ENCODE measurements at regions of chr17 and their contacts with region 1.

Region 1: GRCh38 chr17:38584350-38584925 is 21.3 kb downstream of the SRCIN1 start:
- DNase-seq: peak; percentile 99
- H3K4me3 Mint-ChIP-seq: peak overlapping the region; percentile 9
- H3K27ac Mint-ChIP-seq: peak overlapping the region; percentile 3
- H3K4me1 Mint-ChIP-seq: peaks cover 37% of the 10 kb centered on the region
- H3K27me3 Mint-ChIP-seq: peaks cover 71% of the 10 kb centered on the region
- CTCF ChIP-seq: peak; percentile 100

Region 2: GRCh38 chr17:38498186-38498752 is 86.2 kb before region 1 on chr17:
- CTCF ChIA-PET with region 1: no interaction called
- intact Hi-C with region 1: loop called (anchors 2 kb)
- DNase-seq: no peak
- H3K4me3 Mint-ChIP-seq: no peak overlapping the region
- H3K27ac Mint-ChIP-seq: no peak overlapping the region
- H3K4me1 Mint-ChIP-seq: no peaks in the 10 kb centered on the region
- H3K27me3 Mint-ChIP-seq: no peaks in the 10 kb centered on the region
- CTCF ChIP-seq: peak; percentile 41

Region 3: GRCh38 chr17:38509008-38509771 is 75.2 kb before region 1 on chr17:
- CTCF ChIA-PET with region 1: interaction called, 4 read pairs
- intact Hi-C with region 1: loop called (anchors 5 kb)
- DNase-seq: peak; percentile 52
- H3K4me3 Mint-ChIP-seq: no peak overlapping the region
- H3K27ac Mint-ChIP-seq: peak overlapping the region; percentile 11
- H3K4me1 Mint-ChIP-seq: no peaks in the 10 kb centered on the region
- H3K27me3 Mint-ChIP-seq: no peaks in the 10 kb centered on the region
- CTCF ChIP-seq: peak; percentile 62

Region 4: DNA sequence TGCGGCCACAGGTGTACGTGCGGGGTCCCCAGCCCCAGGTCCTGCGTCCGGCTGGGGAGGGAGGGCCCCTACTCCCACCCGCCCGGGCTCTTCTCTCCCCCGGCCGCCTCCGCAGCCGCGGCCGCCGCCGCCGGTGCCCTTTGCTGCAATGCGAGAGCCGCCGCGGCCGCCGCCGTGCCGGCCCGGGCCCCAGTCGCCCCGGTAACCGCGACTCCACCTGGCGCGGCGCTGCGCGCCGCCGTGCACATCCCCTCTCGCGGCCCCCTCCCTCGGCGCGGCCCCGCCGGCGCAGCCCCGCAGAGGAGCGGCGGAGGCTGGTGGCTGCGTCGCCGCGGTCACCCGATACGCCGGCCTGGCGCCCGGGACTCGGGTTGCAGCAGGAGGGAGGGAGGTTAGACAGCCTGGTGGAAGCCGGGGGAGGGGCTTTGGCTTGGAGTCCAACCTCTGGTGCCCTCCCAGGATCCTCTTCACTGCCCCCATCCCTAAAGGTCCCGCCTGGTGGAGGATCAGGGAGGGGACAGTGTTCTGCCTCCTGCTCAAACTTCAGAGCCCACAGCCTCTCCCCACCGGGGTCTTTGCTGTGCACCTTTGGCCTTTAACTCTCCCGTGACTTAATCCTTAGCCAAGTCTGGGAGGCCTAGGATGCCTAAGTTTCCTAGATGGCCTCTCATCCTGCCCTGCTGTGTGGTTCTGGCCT is 11.6 kb before region 1 on chr17:
- CTCF ChIA-PET with region 1: interaction called, 10 read pairs
- intact Hi-C with region 1: no loop called
- DNase-seq: peak; percentile 75
- H3K4me3 Mint-ChIP-seq: peak overlapping the region; percentile 24
- H3K27ac Mint-ChIP-seq: no peak overlapping the region
- H3K4me1 Mint-ChIP-seq: peaks cover 10% of the 10 kb centered on the region
- H3K27me3 Mint-ChIP-seq: peaks cover 100% of the 10 kb centered on the region
- CTCF ChIP-seq: no peak

Region 5: DNA sequence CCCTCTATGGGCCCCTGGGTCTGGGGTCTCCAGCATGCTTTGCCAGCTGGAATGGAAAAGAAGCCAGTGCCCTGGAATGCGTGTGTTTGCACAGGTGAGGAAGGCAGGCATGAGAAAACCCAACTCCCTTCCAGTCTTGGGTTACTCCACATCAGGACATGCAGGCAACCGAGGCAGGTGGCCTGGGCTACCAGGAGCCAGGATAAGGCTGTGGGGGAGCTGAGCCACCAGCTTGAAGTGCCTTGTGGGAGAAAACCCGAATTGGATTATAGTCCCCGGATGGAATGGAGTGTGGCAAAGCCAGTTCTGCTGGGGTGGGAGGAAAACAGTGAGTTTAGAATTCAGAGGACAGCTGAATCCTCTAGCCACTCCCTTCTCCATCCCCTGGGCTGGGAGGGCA is 14.1 kb after region 1 on chr17:
- CTCF ChIA-PET with region 1: interaction called, 47 read pairs
- intact Hi-C with region 1: no loop called
- DNase-seq: peak; percentile 98
- H3K4me3 Mint-ChIP-seq: no peak overlapping the region
- H3K27ac Mint-ChIP-seq: no peak overlapping the region
- H3K4me1 Mint-ChIP-seq: peaks cover 21% of the 10 kb centered on the region
- H3K27me3 Mint-ChIP-seq: peaks cover 99% of the 10 kb centered on the region
- CTCF ChIP-seq: no peak

Region 6: DNA sequence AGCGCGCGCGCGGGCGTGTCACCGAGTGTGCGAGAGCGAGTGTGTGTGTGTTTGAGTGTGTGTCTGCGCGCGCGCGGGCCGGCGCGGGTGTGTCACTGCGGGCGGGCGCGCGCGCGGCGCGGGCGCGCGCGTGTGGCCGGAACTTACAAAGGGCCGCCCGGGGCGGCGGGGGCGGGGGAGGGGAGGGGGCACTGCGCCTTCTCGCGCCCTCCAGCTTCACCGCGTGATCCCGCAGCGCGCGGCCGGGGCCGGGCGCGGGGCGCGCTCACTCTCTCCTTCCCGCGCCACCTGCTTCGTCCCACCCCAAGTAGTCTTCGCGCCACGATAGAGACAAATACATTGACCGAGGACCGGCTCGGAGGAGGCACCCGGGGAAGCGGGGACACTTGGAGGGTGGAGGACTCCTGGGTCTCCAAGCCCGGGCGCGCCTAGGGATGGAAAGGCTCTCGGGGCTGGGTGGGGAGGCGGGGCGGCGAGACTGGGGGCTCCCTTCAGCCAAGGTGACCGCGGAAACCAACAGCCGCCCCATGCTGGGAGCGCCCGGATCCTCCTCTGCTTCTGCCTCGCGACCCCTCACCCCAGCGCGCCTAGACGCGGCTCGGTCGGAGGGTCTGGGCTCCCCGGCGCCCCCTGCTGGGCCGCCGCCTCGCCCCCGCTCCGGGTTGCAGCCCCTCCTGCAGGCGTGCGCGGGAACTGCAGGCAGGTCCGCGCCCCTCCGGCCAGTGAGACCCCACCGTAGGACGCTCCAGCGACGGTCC is 21.6 kb after region 1 on chr17 and contains the start of gene SRCIN1:
- CTCF ChIA-PET with region 1: interaction called, 11 read pairs
- intact Hi-C with region 1: no loop called
- DNase-seq: peak; percentile 91
- H3K4me3 Mint-ChIP-seq: peak within 1 kb of the TSS; percentile 74
- H3K27ac Mint-ChIP-seq: peak within 1 kb of the TSS; percentile 48
- H3K4me1 Mint-ChIP-seq: peaks cover 31% of the 10 kb centered on the region
- H3K27me3 Mint-ChIP-seq: peaks cover 99% of the 10 kb centered on the region
- CTCF ChIP-seq: peak; percentile 100
- total RNA-seq, gene SRCIN1: 46.6 and 46.7 TPM in 2 replicates

Region 7: DNA sequence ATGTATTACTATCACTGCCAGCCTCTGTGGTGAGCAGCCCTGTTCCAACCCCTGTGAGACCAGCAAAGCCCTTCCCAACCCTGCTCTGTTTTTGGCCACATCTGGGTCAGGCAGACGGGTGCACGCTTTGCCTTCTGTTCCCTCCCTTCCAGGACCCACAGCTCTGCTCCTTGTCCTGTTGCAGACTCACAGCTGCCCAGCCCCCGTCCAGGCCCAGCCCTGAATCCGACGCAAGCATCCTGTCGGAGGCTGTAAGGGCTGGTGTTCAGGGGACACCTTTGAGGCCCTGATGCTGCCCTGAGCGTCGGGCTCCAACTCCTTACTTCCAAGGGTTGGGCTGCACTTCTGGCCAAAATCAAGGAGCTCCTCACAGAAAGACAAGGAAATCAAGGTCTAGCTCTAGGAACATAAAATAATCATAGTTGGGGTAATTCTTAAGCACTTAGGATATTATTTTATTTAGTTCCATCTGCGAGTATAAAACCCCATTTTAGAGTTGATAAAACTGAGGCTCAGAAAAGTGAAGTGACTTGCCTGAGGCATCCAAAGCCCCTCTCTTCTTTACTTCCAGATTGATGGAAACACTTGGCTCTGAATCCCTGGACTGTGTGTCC is 35.6 kb after region 1 on chr17:
- CTCF ChIA-PET with region 1: no interaction called
- intact Hi-C with region 1: no loop called
- DNase-seq: no peak
- H3K4me3 Mint-ChIP-seq: no peak overlapping the region
- H3K27ac Mint-ChIP-seq: no peak overlapping the region
- H3K4me1 Mint-ChIP-seq: no peaks in the 10 kb centered on the region
- H3K27me3 Mint-ChIP-seq: peaks cover 74% of the 10 kb centered on the region
- CTCF ChIP-seq: no peak

Region 8: GRCh38 chr17:38724337-38724988 is 140.0 kb after region 1 on chr17:
- CTCF ChIA-PET with region 1: no interaction called
- intact Hi-C with region 1: no loop called
- DNase-seq: no peak
- H3K4me3 Mint-ChIP-seq: no peak overlapping the region
- H3K27ac Mint-ChIP-seq: no peak overlapping the region
- H3K4me1 Mint-ChIP-seq: peaks cover 12% of the 10 kb centered on the region
- H3K27me3 Mint-ChIP-seq: no peaks in the 10 kb centered on the region
- CTCF ChIP-seq: no peak